ENCODE measurements at regions of chr7 and their contacts with region 1.

Region 1: GRCh38 chr7:140209866-140210609 is 33.3 kb upstream of the KDM7A start:
- DNase-seq: peak; percentile 83
- ATAC-seq: peak; percentile 62
- H3K4me3 Mint-ChIP-seq: peak overlapping the region; percentile 2
- H3K27ac Mint-ChIP-seq: peak overlapping the region; percentile 88
- H3K4me1 Mint-ChIP-seq: peaks cover 80% of the 10 kb centered on the region
- H3K27me3 Mint-ChIP-seq: no peaks in the 10 kb centered on the region

Region 2: GRCh38 chr7:140022582-140023211 is 187.3 kb before region 1 on chr7:
- CTCF ChIA-PET with region 1: no interaction called
- POLR2A ChIA-PET with region 1: no interaction called
- intact Hi-C with region 1: no loop called
- DNase-seq: no peak
- ATAC-seq: no peak
- H3K4me3 Mint-ChIP-seq: no peak overlapping the region
- H3K27ac Mint-ChIP-seq: no peak overlapping the region
- H3K4me1 Mint-ChIP-seq: no peaks in the 10 kb centered on the region
- H3K27me3 Mint-ChIP-seq: no peaks in the 10 kb centered on the region

Region 3: GRCh38 chr7:140222814-140223213 is 12.8 kb after region 1 on chr7:
- CTCF ChIA-PET with region 1: interaction called, 3 read pairs
- POLR2A ChIA-PET with region 1: interaction called, 3 read pairs
- intact Hi-C with region 1: loop called in 1 of 2 experiments (anchors 1 kb)
- DNase-seq: no peak
- ATAC-seq: no peak
- H3K4me3 Mint-ChIP-seq: no peak overlapping the region
- H3K27ac Mint-ChIP-seq: no peak overlapping the region
- H3K4me1 Mint-ChIP-seq: peaks cover 38% of the 10 kb centered on the region
- H3K27me3 Mint-ChIP-seq: no peaks in the 10 kb centered on the region

Region 4: GRCh38 chr7:140342727-140343514 is 132.9 kb after region 1 on chr7:
- CTCF ChIA-PET with region 1: no interaction called
- POLR2A ChIA-PET with region 1: no interaction called
- intact Hi-C with region 1: no loop called
- DNase-seq: peak; percentile 22
- ATAC-seq: no peak
- H3K4me3 Mint-ChIP-seq: no peak overlapping the region
- H3K27ac Mint-ChIP-seq: no peak overlapping the region
- H3K4me1 Mint-ChIP-seq: no peaks in the 10 kb centered on the region
- H3K27me3 Mint-ChIP-seq: no peaks in the 10 kb centered on the region

Measured in activated CD4-positive, alpha-beta T cell treated with anti-CD3 and anti-CD28 coated beads for 36 hours (primary cell).